ENCODE measurements at regions of chr9 and their contacts with region 1.

Region 1: GRCh38 chr9:92265159-92265558 is 28.3 kb downstream of the IARS1 start:
- DNase-seq: no peak
- ATAC-seq: no peak
- H3K4me3 ChIP-seq: no peak overlapping the region
- H3K27ac ChIP-seq: no peak overlapping the region
- H3K4me1 ChIP-seq: no peaks in the 10 kb centered on the region
- H3K27me3 ChIP-seq: no peaks in the 10 kb centered on the region
- CTCF ChIP-seq: no peak
- POLR2A ChIP-seq: no peak
- RAD21 ChIP-seq: no peak

Region 2: GRCh38 chr9:92315456-92315855 is 50.3 kb after region 1 on chr9:
- CTCF ChIA-PET with region 1: no interaction called
- POLR2A ChIA-PET with region 1: no interaction called
- RAD21 ChIA-PET with region 1: no interaction called
- intact Hi-C with region 1: loop called (anchors 5 kb)
- DNase-seq: no peak
- ATAC-seq: no peak
- H3K4me3 ChIP-seq: no peak overlapping the region
- H3K27ac ChIP-seq: no peak overlapping the region
- H3K4me1 ChIP-seq: no peaks in the 10 kb centered on the region
- H3K27me3 ChIP-seq: no peaks in the 10 kb centered on the region
- CTCF ChIP-seq: no peak
- POLR2A ChIP-seq: no peak
- RAD21 ChIP-seq: no peak